ENCODE measurements at regions of chr7 and their contacts with region 1.

Region 1: GRCh38 chr7:104643587-104644217 is 315.3 kb downstream of the LHFPL3 start:
- DNase-seq: peak; percentile 23
- H3K4me3 ChIP-seq: no peak overlapping the region
- H3K27ac ChIP-seq: no peak overlapping the region
- H3K4me1 ChIP-seq: no peaks in the 10 kb centered on the region
- H3K27me3 ChIP-seq: peaks cover 0 to 2% of the 10 kb centered on the region in 2 experiments
- CTCF ChIP-seq: peak; percentile 54 to 58
- POLR2A ChIP-seq: no peak

Region 2: GRCh38 chr7:104629403-104629802 is 14.3 kb before region 1 on chr7:
- CTCF ChIA-PET with region 1: interaction called, 28 read pairs
- POLR2A ChIA-PET with region 1: no interaction called
- dilution Hi-C with region 1: no loop called
- intact Hi-C with region 1: no loop called
- DNase-seq: no peak
- H3K4me3 ChIP-seq: no peak overlapping the region
- H3K27ac ChIP-seq: no peak overlapping the region
- H3K4me1 ChIP-seq: no peaks in the 10 kb centered on the region
- H3K27me3 ChIP-seq: no peaks in the 10 kb centered on the region
- CTCF ChIP-seq: no peak
- POLR2A ChIP-seq: no peak

Region 3: GRCh38 chr7:104653825-104654402 is 10.2 kb after region 1 on chr7:
- CTCF ChIA-PET with region 1: interaction called, 29 read pairs
- POLR2A ChIA-PET with region 1: no interaction called
- dilution Hi-C with region 1: no loop called
- intact Hi-C with region 1: no loop called
- DNase-seq: no peak
- H3K4me3 ChIP-seq: no peak overlapping the region
- H3K27ac ChIP-seq: no peak overlapping the region
- H3K4me1 ChIP-seq: no peaks in the 10 kb centered on the region
- H3K27me3 ChIP-seq: peaks cover 0 to 2% of the 10 kb centered on the region in 2 experiments
- CTCF ChIP-seq: no peak
- POLR2A ChIP-seq: no peak

Region 4: GRCh38 chr7:104767826-104768536 is 124.3 kb after region 1 on chr7:
- CTCF ChIA-PET with region 1: no interaction called
- POLR2A ChIA-PET with region 1: no interaction called
- dilution Hi-C with region 1: no loop called
- intact Hi-C with region 1: no loop called
- DNase-seq: no peak
- H3K4me3 ChIP-seq: no peak overlapping the region
- H3K27ac ChIP-seq: no peak overlapping the region
- H3K4me1 ChIP-seq: no peaks in the 10 kb centered on the region
- H3K27me3 ChIP-seq: peaks cover 4 to 5% of the 10 kb centered on the region in 2 experiments
- CTCF ChIP-seq: peak in 1 of 2 donors; percentile 14
- POLR2A ChIP-seq: no peak

Region 5: GRCh38 chr7:104848138-104848990 is 204.7 kb after region 1 on chr7:
- CTCF ChIA-PET with region 1: interaction called, 187 read pairs
- POLR2A ChIA-PET with region 1: no interaction called
- dilution Hi-C with region 1: no loop called
- intact Hi-C with region 1: loop called (anchors 1 kb)
- DNase-seq: peak; percentile 62
- H3K4me3 ChIP-seq: no peak overlapping the region
- H3K27ac ChIP-seq: no peak overlapping the region
- H3K4me1 ChIP-seq: no peaks in the 10 kb centered on the region
- H3K27me3 ChIP-seq: peaks cover 6 to 13% of the 10 kb centered on the region in 2 experiments
- CTCF ChIP-seq: peak; percentile 79 to 81
- POLR2A ChIP-seq: no peak

Region 6: GRCh38 chr7:104862719-104863118 is 219.0 kb after region 1 on chr7:
- CTCF ChIA-PET with region 1: interaction called, 20 read pairs
- POLR2A ChIA-PET with region 1: no interaction called
- dilution Hi-C with region 1: no loop called
- intact Hi-C with region 1: no loop called
- DNase-seq: no peak
- H3K4me3 ChIP-seq: no peak overlapping the region
- H3K27ac ChIP-seq: no peak overlapping the region
- H3K4me1 ChIP-seq: no peaks in the 10 kb centered on the region
- H3K27me3 ChIP-seq: peaks cover 0 to 17% of the 10 kb centered on the region in 2 experiments
- CTCF ChIP-seq: no peak
- POLR2A ChIP-seq: no peak